Activated CD8-positive, alpha-beta memory T cell treated with anti-CD3 and anti-CD28 coated beads, Interleukin-2, amount 10 ng/mL, durations not matched to agents 7 days and 5 days (primary cell): ENCODE measurements at regions of chr11 and their contacts with region 1.

Region 1: DNA sequence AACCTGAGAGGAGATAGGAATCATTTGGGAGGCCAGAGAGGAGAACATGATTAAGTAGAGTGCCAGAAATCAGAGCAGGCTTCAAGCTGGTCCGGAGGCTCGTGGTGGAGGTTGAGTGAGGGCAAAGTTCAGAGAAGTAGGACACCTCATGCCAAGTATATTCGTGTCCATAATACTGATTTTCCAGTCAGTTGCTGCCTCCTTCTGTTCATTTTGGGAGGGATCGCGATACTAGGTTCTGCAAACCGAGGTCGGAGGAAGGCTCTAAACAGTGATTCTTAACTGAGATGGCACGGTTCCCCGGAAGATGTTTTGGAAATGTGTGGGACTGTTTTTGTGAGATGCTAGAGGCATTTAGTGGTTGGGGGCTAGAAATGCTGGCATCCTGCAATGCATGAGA is 13.6 kb upstream of the CD3E start:
- DNase-seq: peak; percentile 66
- ATAC-seq: peak; percentile 72
- H3K4me3 Mint-ChIP-seq: no peak overlapping the region
- H3K27ac Mint-ChIP-seq: no peak overlapping the region
- H3K4me1 Mint-ChIP-seq: peaks cover 20% of the 10 kb centered on the region
- H3K27me3 Mint-ChIP-seq: no peaks in the 10 kb centered on the region

Region 2: GRCh38 chr11:117861151-117862018 is 429.5 kb before region 1 on chr11:
- CTCF ChIA-PET with region 1: no interaction called
- DNase-seq: no peak
- ATAC-seq: no peak
- H3K4me3 Mint-ChIP-seq: no peak overlapping the region
- H3K27ac Mint-ChIP-seq: peak overlapping the region; percentile 28
- H3K4me1 Mint-ChIP-seq: peaks cover 13% of the 10 kb centered on the region
- H3K27me3 Mint-ChIP-seq: peaks cover 23% of the 10 kb centered on the region

Region 3: DNA sequence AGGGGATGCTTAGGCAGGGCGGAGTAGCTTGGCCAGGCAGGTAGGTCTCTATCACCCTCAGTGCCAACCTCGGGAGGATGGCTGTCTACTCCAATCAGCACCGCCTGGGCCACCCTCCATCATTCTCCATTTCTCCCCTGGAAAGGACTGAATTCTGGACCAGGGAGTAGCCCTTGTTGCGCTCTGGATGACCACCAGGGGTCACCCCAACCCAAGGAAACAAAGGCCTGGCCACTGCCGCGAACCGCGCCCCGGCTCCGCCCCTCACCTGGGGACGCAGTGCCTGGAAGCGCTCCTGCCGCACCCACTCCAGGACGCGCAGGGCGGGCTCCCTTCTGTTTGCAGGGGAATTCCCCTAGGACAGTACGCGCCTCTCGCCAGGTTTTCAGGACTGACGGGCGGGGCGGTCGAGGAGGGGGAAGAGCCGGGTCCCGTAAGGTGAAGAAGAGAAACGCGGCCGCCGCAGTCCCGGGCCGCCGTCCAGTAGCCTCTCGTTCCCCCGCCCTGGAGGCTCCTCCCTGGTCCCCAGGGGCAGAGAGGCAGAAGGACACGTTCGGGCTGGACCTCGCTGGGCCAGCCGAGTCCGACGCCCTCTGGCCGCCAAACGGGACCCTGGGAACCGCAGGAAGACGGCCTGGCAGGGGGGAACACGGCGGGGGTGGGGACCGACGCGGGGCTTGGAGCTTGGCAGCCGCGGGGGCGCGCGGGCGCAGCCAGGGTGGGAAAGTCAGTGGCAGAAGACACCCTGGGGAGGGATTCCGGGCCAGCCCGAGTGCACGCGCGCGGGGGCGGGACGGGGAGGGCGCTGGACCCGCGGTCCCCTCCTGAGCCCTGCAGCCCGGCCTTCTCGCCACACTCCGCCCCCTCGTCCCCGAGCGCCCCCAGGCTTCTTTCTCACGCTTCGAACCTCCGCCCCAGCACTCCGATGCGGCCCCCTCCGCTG is 145.4 kb before region 1 on chr11:
- CTCF ChIA-PET with region 1: interaction called, 16 read pairs
- DNase-seq: peak; percentile 91
- ATAC-seq: peak; percentile 95
- H3K4me3 Mint-ChIP-seq: peak overlapping the region; percentile 71
- H3K27ac Mint-ChIP-seq: no peak overlapping the region
- H3K4me1 Mint-ChIP-seq: peaks cover 21% of the 10 kb centered on the region
- H3K27me3 Mint-ChIP-seq: peaks cover 60% of the 10 kb centered on the region

Region 4: GRCh38 chr11:118319337-118319707 is 28.4 kb after region 1 on chr11:
- CTCF ChIA-PET with region 1: no interaction called
- DNase-seq: no peak
- ATAC-seq: no peak
- H3K4me3 Mint-ChIP-seq: no peak overlapping the region
- H3K27ac Mint-ChIP-seq: peak overlapping the region; percentile 8
- H3K4me1 Mint-ChIP-seq: peaks cover 63% of the 10 kb centered on the region
- H3K27me3 Mint-ChIP-seq: no peaks in the 10 kb centered on the region

Region 5: DNA sequence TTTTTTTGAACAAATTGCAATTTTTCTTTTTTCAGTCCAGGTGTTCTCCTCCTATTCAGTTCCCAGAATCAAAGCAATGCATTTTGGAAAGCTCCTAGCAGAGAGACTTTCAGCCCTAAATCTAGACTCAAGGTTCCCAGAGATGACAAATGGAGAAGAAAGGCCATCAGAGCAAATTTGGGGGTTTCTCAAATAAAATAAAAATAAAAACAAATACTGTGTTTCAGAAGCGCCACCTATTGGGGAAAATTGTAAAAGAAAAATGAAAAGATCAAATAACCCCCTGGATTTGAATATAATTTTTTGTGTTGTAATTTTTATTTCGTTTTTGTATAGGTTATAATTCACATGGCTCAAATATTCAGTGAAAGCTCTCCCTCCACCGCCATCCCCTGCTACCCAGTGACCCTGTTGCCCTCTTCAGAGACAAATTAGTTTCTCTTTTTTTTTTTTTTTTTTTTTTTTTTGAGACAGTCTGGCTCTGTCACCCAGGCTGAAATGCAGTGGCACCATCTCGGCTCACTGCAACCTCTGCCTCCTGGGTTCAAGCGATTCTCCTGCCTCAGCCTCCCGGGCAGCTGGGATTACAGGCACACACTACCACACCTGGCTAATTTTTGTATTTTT is 62.3 kb after region 1 on chr11:
- CTCF ChIA-PET with region 1: interaction called, 11 read pairs
- DNase-seq: no peak
- ATAC-seq: peak; percentile 20
- H3K4me3 Mint-ChIP-seq: no peak overlapping the region
- H3K27ac Mint-ChIP-seq: peak overlapping the region; percentile 66
- H3K4me1 Mint-ChIP-seq: peaks cover 30% of the 10 kb centered on the region
- H3K27me3 Mint-ChIP-seq: no peaks in the 10 kb centered on the region